Endothelial cell of umbilical vein (primary cell): ENCODE measurements at regions of chr9 and their contacts with region 1.

Region 1: GRCh38 chr9:14353222-14354056 is 39.5 kb upstream of the NFIB start:
- DNase-seq: peak; percentile 89
- H3K4me3 ChIP-seq: no peak overlapping the region
- H3K27ac ChIP-seq: peak overlapping the region; percentile 2
- H3K4me1 ChIP-seq: peaks cover 45% of the 10 kb centered on the region
- H3K27me3 ChIP-seq: no peaks in the 10 kb centered on the region
- CTCF ChIP-seq: peak; percentile 95 to 97
- POLR2A ChIP-seq: no peak

Region 2: DNA sequence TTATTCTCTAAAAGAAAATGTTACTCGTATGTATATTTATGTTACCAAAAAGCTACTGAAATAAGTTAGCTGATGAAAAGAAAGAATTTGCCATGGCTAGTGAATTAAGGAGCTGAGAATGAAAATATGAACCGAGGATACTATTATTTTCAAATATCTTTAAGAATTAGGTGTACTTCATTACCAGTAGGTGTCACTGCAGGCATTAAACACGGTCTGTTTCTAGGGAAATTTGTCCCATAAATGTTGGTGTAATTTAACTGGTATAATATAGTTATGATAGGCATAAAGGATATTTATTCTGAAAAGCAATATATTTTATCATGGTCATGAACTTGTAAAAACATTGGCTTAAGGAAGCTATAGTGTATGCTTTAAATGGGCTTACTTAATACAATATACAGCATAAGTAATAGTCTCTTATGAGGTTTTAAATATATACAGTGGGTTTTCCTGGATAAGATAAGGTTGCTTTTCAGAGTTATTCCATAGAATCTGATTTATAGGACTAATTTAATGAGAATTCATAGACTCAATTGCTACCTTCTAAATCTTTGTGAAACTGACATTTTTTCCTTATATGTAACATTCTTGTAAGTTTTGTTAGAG is 1001.6 kb before region 1 on chr9:
- CTCF ChIA-PET with region 1: interaction called, 19 read pairs
- POLR2A ChIA-PET with region 1: no interaction called
- dilution Hi-C with region 1: no loop called
- intact Hi-C with region 1: loop called (anchors 2 kb)
- DNase-seq: peak; percentile 74
- H3K4me3 ChIP-seq: no peak overlapping the region
- H3K27ac ChIP-seq: no peak overlapping the region
- H3K4me1 ChIP-seq: no peaks in the 10 kb centered on the region
- H3K27me3 ChIP-seq: no peaks in the 10 kb centered on the region
- CTCF ChIP-seq: peak; percentile 32 to 37
- POLR2A ChIP-seq: no peak

Region 3: GRCh38 chr9:13575558-13575957 is 777.9 kb before region 1 on chr9:
- CTCF ChIA-PET with region 1: no interaction called
- POLR2A ChIA-PET with region 1: no interaction called
- dilution Hi-C with region 1: no loop called
- intact Hi-C with region 1: loop called (anchors 5 kb)
- DNase-seq: peak; percentile 95
- H3K4me3 ChIP-seq: no peak overlapping the region
- H3K27ac ChIP-seq: peak overlapping the region; percentile 89
- H3K4me1 ChIP-seq: peaks cover 23% of the 10 kb centered on the region
- H3K27me3 ChIP-seq: no peaks in the 10 kb centered on the region
- CTCF ChIP-seq: no peak
- POLR2A ChIP-seq: no peak

Region 4: DNA sequence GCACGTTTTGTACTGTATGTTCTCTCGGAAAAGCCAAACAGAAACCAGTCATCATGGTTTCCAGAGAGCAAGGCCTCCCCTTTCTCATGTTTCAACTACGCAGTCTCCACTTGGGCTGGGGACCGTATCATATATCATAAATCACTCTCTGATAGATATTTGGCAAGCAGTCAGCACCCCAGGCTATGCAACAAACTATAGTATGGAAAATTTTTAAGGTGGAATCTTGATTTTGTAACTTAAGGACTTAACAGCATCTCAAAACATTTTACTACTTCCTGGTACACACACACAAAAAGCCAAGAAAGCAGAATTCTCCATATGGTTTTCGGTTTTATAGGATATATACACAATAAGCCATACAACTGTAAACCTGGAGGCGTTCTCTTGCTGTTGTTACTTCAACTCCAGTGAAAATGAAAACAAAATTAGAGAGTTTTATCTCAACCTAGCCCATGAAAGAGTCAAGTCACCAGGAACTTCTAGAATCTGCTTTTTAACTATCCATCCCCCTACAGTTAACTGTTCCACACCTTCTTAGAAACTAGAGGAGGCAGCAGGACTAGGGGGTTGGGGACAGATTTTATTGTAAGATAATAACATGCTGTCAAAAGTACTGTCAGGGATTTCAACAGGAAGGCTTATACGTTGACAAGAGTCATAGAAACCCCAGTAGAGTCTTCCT is 322.9 kb before region 1 on chr9:
- CTCF ChIA-PET with region 1: no interaction called
- POLR2A ChIA-PET with region 1: no interaction called
- dilution Hi-C with region 1: no loop called
- intact Hi-C with region 1: loop called (anchors 2 kb)
- DNase-seq: peak; percentile 97
- H3K4me3 ChIP-seq: peak overlapping the region in 2 of 3 experiments; percentile 25 to 46
- H3K27ac ChIP-seq: peak overlapping the region; percentile 88
- H3K4me1 ChIP-seq: peaks cover 44% of the 10 kb centered on the region
- H3K27me3 ChIP-seq: no peaks in the 10 kb centered on the region
- CTCF ChIP-seq: no peak
- POLR2A ChIP-seq: peak; percentile 31

Region 5: DNA sequence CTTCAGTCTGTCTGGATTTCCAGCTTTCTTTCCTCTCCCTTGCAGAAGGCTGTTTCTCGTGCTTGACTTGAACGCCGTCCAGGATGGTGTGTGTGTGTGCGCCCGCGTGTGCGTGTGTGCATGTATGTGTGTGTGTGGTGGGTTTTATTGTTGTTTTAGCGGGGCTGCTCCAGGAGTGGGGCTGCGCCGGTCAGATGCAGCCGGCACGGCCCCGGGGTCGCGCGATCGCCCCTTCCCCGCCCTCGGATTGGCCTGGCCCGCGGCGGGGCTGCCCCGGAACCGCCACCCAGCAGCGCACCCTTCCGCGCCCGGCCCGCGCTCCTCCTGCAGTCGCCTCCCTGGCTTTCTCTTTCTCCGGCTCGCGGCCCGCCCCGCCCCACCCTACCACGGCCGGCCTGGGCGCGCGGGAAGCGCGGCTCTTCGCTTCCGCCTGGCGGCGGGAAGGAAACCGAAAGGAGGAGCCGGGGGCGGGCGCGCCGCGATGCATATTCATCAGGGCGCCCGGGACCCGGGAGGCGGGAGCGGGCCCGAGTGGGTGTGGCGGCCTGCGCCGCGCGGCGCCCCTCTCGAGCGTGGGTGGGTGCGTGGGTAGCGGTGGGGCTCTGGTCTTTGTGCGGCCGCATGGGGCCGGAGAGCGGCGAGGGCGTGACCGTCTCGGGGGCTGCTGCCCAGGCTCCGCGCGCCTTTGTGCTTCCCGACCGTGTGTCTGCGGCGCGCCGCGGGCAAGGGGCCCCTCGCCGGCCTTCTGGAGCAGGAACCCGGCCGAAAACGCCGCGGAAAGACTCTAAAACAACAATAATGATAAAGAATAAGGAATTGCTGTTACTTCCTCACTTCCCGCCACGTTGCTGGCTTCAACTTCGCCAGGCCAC is 31.0 kb before region 1 on chr9:
- CTCF ChIA-PET with region 1: interaction called, 25 read pairs
- POLR2A ChIA-PET with region 1: no interaction called
- dilution Hi-C with region 1: no loop called
- intact Hi-C with region 1: loop called (anchors 1 kb)
- DNase-seq: peak; percentile 93
- H3K4me3 ChIP-seq: peak overlapping the region; percentile 44 to 91 (median 79)
- H3K27ac ChIP-seq: peak overlapping the region; percentile 94
- H3K4me1 ChIP-seq: peaks cover 62% of the 10 kb centered on the region
- H3K27me3 ChIP-seq: no peaks in the 10 kb centered on the region
- CTCF ChIP-seq: peak in 1 of 2 donors; percentile 17
- POLR2A ChIP-seq: peak; percentile 59

Region 6: GRCh38 chr9:14395317-14396082 is 42.1 kb after region 1 on chr9:
- CTCF ChIA-PET with region 1: interaction called, 45 read pairs
- POLR2A ChIA-PET with region 1: interaction called, 3 read pairs
- dilution Hi-C with region 1: no loop called
- intact Hi-C with region 1: loop called (anchors 1 kb)
- DNase-seq: no peak
- H3K4me3 ChIP-seq: no peak overlapping the region
- H3K27ac ChIP-seq: no peak overlapping the region
- H3K4me1 ChIP-seq: peaks cover 8% of the 10 kb centered on the region
- H3K27me3 ChIP-seq: no peaks in the 10 kb centered on the region
- CTCF ChIP-seq: no peak
- POLR2A ChIP-seq: no peak